HEK293 (cell line): ENCODE measurements at regions of chr2 and their contacts with region 1.

Region 1: GRCh38 chr2:94986392-94986963 is 39.0 kb upstream of the MAL start:
- H3K4me3 ChIP-seq: no peak overlapping the region
- H3K27ac ChIP-seq: no peak overlapping the region
- H3K4me1 ChIP-seq: no peaks in the 10 kb centered on the region
- CTCF ChIP-seq: no peak

Region 2: GRCh38 chr2:94996305-94997100 is 10.0 kb after region 1 on chr2:
- CTCF ChIA-PET with region 1: interaction called, 13 read pairs
- POLR2A ChIA-PET with region 1: no interaction called
- H3K4me3 ChIP-seq: no peak overlapping the region
- H3K27ac ChIP-seq: no peak overlapping the region
- H3K4me1 ChIP-seq: no peaks in the 10 kb centered on the region
- CTCF ChIP-seq: no peak

Region 3: DNA sequence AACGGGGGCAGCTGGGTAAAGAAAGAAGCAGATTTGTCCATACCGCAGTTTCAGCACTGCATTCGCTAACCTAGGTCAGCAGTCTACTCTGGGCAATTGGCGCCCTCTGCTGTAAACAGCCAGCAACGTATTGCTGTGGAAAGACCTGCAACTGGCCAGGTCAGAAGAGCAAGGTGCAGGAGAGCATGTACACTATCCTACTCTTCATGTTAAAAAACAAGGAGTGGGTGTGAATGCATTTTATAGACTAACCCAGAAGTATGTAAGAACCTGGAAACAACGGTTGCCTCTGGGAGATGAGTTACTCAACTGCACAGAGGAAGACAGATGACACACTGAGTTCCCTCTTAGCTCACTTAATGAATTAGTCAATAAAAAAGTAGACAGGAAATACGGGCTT is 128.9 kb after region 1 on chr2:
- CTCF ChIA-PET with region 1: interaction called, 12 read pairs
- POLR2A ChIA-PET with region 1: no interaction called
- H3K4me3 ChIP-seq: no peak overlapping the region
- H3K27ac ChIP-seq: no peak overlapping the region
- H3K4me1 ChIP-seq: no peaks in the 10 kb centered on the region; the same call in 1 of the 2 replicates
- CTCF ChIP-seq: no peak